ENCODE measurements at regions of chr1 and their contacts with region 1.

Region 1: GRCh38 chr1:179002552-179003345 is 22.9 kb upstream of the FAM20B start:
- DNase-seq: peak; percentile 82 to 99
- H3K4me3 ChIP-seq: peak overlapping the region in 1 of 4 experiments; percentile 39; a peak in 1 of 8 replicates
- H3K27ac ChIP-seq: no peak overlapping the region
- H3K4me1 ChIP-seq: no peaks in the 10 kb centered on the region
- H3K27me3 ChIP-seq: no peaks in the 10 kb centered on the region
- CTCF ChIP-seq: peak; percentile 83 to 98 (median 97)
- EP300 ChIP-seq: no peak
- POLR2A ChIP-seq: no peak
- RAD21 ChIP-seq: peak; percentile 97 to 98

Region 2: GRCh38 chr1:178532392-178532791 is 470.4 kb before region 1 on chr1:
- CTCF ChIA-PET with region 1: interaction called, 92 read pairs
- POLR2A ChIA-PET with region 1: interaction called, 3 read pairs
- DNase-seq: peak; percentile 54 to 94
- H3K4me3 ChIP-seq: no peak overlapping the region; a peak in 1 of 8 replicates
- H3K27ac ChIP-seq: no peak overlapping the region
- H3K4me1 ChIP-seq: peaks cover 0 to 2% (median under 1%) of the 10 kb centered on the region in 4 experiments; a peak in 1 of 7 replicates
- H3K27me3 ChIP-seq: no peaks in the 10 kb centered on the region; a peak in 1 of 7 replicates
- CTCF ChIP-seq: peak; percentile 89 to 96 (median 94)
- EP300 ChIP-seq: no peak
- POLR2A ChIP-seq: no peak
- RAD21 ChIP-seq: peak; percentile 96 to 97

Region 3: GRCh38 chr1:178706432-178706831 is 296.3 kb before region 1 on chr1:
- CTCF ChIA-PET with region 1: interaction called, 14 read pairs
- POLR2A ChIA-PET with region 1: no interaction called
- DNase-seq: no peak
- H3K4me3 ChIP-seq: no peak overlapping the region
- H3K27ac ChIP-seq: no peak overlapping the region
- H3K4me1 ChIP-seq: peaks cover 0 to 3% (median 0%) of the 10 kb centered on the region in 4 experiments; a peak in 1 of 7 replicates
- H3K27me3 ChIP-seq: no peaks in the 10 kb centered on the region
- CTCF ChIP-seq: no peak
- EP300 ChIP-seq: no peak
- POLR2A ChIP-seq: no peak
- RAD21 ChIP-seq: no peak

Region 4: GRCh38 chr1:178806665-178807300 is 196.0 kb before region 1 on chr1:
- CTCF ChIA-PET with region 1: interaction called, 11 read pairs
- POLR2A ChIA-PET with region 1: no interaction called
- DNase-seq: no peak
- H3K4me3 ChIP-seq: no peak overlapping the region
- H3K27ac ChIP-seq: no peak overlapping the region
- H3K4me1 ChIP-seq: no peaks in the 10 kb centered on the region
- H3K27me3 ChIP-seq: no peaks in the 10 kb centered on the region
- CTCF ChIP-seq: no peak
- EP300 ChIP-seq: no peak
- POLR2A ChIP-seq: no peak
- RAD21 ChIP-seq: no peak

Region 5: GRCh38 chr1:178931858-178932551 is 70.7 kb before region 1 on chr1:
- CTCF ChIA-PET with region 1: interaction called, 29 read pairs
- POLR2A ChIA-PET with region 1: interaction called, 3 read pairs
- DNase-seq: no peak
- H3K4me3 ChIP-seq: no peak overlapping the region
- H3K27ac ChIP-seq: no peak overlapping the region
- H3K4me1 ChIP-seq: peaks cover 5 to 15% (median 11%) of the 10 kb centered on the region in 4 experiments; a peak in 5 of 7 replicates
- H3K27me3 ChIP-seq: no peaks in the 10 kb centered on the region
- CTCF ChIP-seq: no peak
- EP300 ChIP-seq: no peak
- POLR2A ChIP-seq: no peak
- RAD21 ChIP-seq: no peak

Region 6: GRCh38 chr1:178986204-178986603 is 16.5 kb before region 1 on chr1:
- CTCF ChIA-PET with region 1: interaction called, 20 read pairs
- POLR2A ChIA-PET with region 1: no interaction called
- DNase-seq: no peak
- H3K4me3 ChIP-seq: no peak overlapping the region
- H3K27ac ChIP-seq: no peak overlapping the region
- H3K4me1 ChIP-seq: no peaks in the 10 kb centered on the region
- H3K27me3 ChIP-seq: no peaks in the 10 kb centered on the region
- CTCF ChIP-seq: no peak
- EP300 ChIP-seq: no peak
- POLR2A ChIP-seq: no peak
- RAD21 ChIP-seq: no peak